CD4-positive, alpha-beta T cell (primary cell): ENCODE measurements at regions of chr6 and their contacts with region 1.

Region 1: GRCh38 chr6:30013291-30013922 is 47.7 kb upstream of the POLR1H start:
- DNase-seq: peak in 9 of 14 experiments; percentile 3 to 71 (median 46)
- ATAC-seq: peak; percentile 56
- H3K4me3 ChIP-seq: no peak overlapping the region
- H3K4me3 Mint-ChIP-seq: no peak overlapping the region
- H3K27ac ChIP-seq: no peak overlapping the region
- H3K27ac Mint-ChIP-seq: no peak overlapping the region
- H3K4me1 ChIP-seq: no peaks in the 10 kb centered on the region
- H3K4me1 Mint-ChIP-seq: no peaks in the 10 kb centered on the region
- H3K27me3 ChIP-seq: peaks cover 11 to 16% of the 10 kb centered on the region in 2 experiments
- H3K27me3 Mint-ChIP-seq: peaks cover 30% of the 10 kb centered on the region
- CTCF ChIP-seq: peak; percentile 77

Region 2: GRCh38 chr6:28838634-28839442 is 1174.6 kb before region 1 on chr6:
- CTCF ChIA-PET with region 1: no interaction called
- POLR2A ChIA-PET with region 1: no interaction called
- intact Hi-C with region 1: no loop called
- DNase-seq: peak; percentile 58 to 90 (median 74)
- ATAC-seq: peak; percentile 62
- H3K4me3 ChIP-seq: peak overlapping the region; percentile 65
- H3K4me3 Mint-ChIP-seq: peak overlapping the region; percentile 76
- H3K27ac ChIP-seq: peak overlapping the region; percentile 12 to 38
- H3K27ac Mint-ChIP-seq: peak overlapping the region; percentile 96
- H3K4me1 ChIP-seq: peaks cover 14% of the 10 kb centered on the region
- H3K4me1 Mint-ChIP-seq: peaks cover 22% of the 10 kb centered on the region
- H3K27me3 ChIP-seq: peaks cover 3 to 22% of the 10 kb centered on the region in 2 experiments
- H3K27me3 Mint-ChIP-seq: peaks cover 49% of the 10 kb centered on the region
- CTCF ChIP-seq: peak; percentile 77

Region 3: DNA sequence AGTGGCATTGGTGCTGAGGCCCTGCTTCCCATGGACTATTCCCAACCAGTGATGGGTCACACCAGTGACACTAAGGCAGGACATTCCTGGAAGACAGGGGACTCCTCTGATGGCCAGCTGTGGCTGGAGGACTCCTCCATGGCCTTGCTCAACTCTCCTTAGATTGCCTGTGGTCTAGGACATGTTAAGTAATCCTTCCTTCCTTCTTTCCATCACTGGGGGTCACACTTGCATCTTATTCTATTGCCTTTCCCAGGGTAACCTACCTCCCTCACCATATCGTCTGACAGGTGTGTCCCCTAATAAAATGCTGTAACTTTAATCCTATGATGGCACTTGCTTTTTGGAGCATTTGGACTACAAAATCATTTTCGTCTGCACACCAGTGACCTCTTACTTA is 95.5 kb before region 1 on chr6:
- CTCF ChIA-PET with region 1: no interaction called
- POLR2A ChIA-PET with region 1: no interaction called
- intact Hi-C with region 1: loop called in 1 of 2 experiments (anchors 2 kb)
- DNase-seq: peak in 2 of 14 experiments; percentile 19 to 34
- ATAC-seq: no peak
- H3K4me3 ChIP-seq: no peak overlapping the region
- H3K4me3 Mint-ChIP-seq: no peak overlapping the region
- H3K27ac ChIP-seq: no peak overlapping the region
- H3K27ac Mint-ChIP-seq: no peak overlapping the region
- H3K4me1 ChIP-seq: peaks cover 4% of the 10 kb centered on the region
- H3K4me1 Mint-ChIP-seq: no peaks in the 10 kb centered on the region
- H3K27me3 ChIP-seq: peaks cover 0 to 3% of the 10 kb centered on the region in 2 experiments
- H3K27me3 Mint-ChIP-seq: no peaks in the 10 kb centered on the region
- CTCF ChIP-seq: no peak

Region 4: DNA sequence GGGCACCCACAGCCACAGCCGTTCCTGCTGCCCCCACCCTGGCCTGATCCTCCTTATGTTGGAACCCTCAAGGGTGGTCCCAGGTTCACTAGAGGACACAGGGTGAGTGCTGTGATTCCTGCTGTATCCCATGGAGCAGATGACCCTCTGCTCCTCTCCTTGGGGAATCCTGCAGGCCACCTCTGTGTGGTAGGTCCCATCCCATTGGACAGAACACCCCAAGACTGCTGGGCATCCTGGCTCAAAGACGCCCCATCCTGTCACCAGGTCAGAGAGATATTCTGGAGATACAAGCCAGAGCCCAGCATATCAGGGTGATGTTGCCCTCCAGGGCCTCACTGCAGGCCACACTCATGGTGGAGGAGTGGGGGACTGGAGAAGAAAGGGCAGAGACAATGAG is 42.7 kb before region 1 on chr6:
- CTCF ChIA-PET with region 1: interaction called, 5 read pairs
- POLR2A ChIA-PET with region 1: no interaction called
- intact Hi-C with region 1: loop called in 1 of 2 experiments (anchors 2 kb)
- DNase-seq: no peak
- ATAC-seq: no peak
- H3K4me3 ChIP-seq: no peak overlapping the region
- H3K4me3 Mint-ChIP-seq: no peak overlapping the region
- H3K27ac ChIP-seq: no peak overlapping the region
- H3K27ac Mint-ChIP-seq: no peak overlapping the region
- H3K4me1 ChIP-seq: peaks cover 43% of the 10 kb centered on the region
- H3K4me1 Mint-ChIP-seq: peaks cover 38% of the 10 kb centered on the region
- H3K27me3 ChIP-seq: peaks cover 14% of the 10 kb centered on the region in 2 experiments
- H3K27me3 Mint-ChIP-seq: peaks cover 43% of the 10 kb centered on the region
- CTCF ChIP-seq: no peak